Heart left ventricle (tissue), 16 donors: ENCODE measurements at regions of chr6 and their contacts with region 1.

Region 1: GRCh38 chr6:111210194-111210728 is 123.0 kb downstream of the SLC16A10 start:
- DNase-seq: no peak
- ATAC-seq: peak in 3 of 4 donors; percentile 53 to 72 (median 61)
- H3K4me3 ChIP-seq: no peak overlapping the region
- H3K27ac ChIP-seq: no peak overlapping the region
- H3K4me1 ChIP-seq: peaks cover 0 to 5% (median 0%) of the 10 kb centered on the region in 12 donors
- H3K27me3 ChIP-seq: no peaks in the 10 kb centered on the region
- CTCF ChIP-seq: peak; percentile 58 to 81 (median 72)
- POLR2A ChIP-seq: no peak

Region 2: DNA sequence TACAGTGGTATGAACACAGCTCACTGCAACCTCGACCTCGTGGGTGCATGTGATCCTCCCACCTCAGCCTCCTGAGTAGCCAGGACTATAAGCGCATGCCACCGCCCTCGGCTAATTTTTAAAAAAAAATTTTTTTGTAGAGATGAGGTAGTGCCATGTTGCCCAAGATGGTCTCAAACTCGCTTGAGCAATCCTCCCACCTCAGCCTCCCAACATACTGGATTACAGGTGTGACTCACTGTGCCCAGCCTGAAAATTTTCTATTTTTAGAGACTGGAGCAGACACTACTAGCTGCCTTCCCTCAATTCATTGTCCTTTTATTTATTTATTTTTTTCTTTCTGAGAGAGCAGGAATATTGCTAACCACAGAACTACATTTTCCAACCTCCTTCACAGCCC is 272.1 kb before region 1 on chr6:
- intact Hi-C with region 1: no loop called
- DNase-seq: no peak
- ATAC-seq: no peak
- H3K4me3 ChIP-seq: no peak overlapping the region
- H3K27ac ChIP-seq: no peak overlapping the region
- H3K4me1 ChIP-seq: peaks cover 0 to 14% (median 0%) of the 10 kb centered on the region in 12 donors
- H3K27me3 ChIP-seq: no peaks in the 10 kb centered on the region
- CTCF ChIP-seq: no peak
- POLR2A ChIP-seq: no peak

Region 3: GRCh38 chr6:111011360-111012142 is 198.7 kb before region 1 on chr6:
- intact Hi-C with region 1: loop called in 9 of 10 experiments (anchors 1 to 5 kb)
- DNase-seq: no peak
- ATAC-seq: peak in 3 of 4 donors; percentile 59 to 68 (median 65)
- H3K4me3 ChIP-seq: no peak overlapping the region
- H3K27ac ChIP-seq: no peak overlapping the region
- H3K4me1 ChIP-seq: peaks cover 0 to 7% (median 0%) of the 10 kb centered on the region in 12 donors
- H3K27me3 ChIP-seq: no peaks in the 10 kb centered on the region
- CTCF ChIP-seq: peak; percentile 23 to 70 (median 52)
- POLR2A ChIP-seq: no peak

Region 4: GRCh38 chr6:111030008-111031007 is 180.0 kb before region 1 on chr6:
- intact Hi-C with region 1: loop called in 2 of 10 experiments (anchors 5 to 10 kb)
- DNase-seq: peak; percentile 43 to 77 (median 68)
- ATAC-seq: peak; percentile 92 to 94 (median 93)
- H3K4me3 ChIP-seq: no peak overlapping the region
- H3K27ac ChIP-seq: peak overlapping the region in 11 of 12 donors; percentile 34 to 83 (median 58)
- H3K4me1 ChIP-seq: peaks cover 0 to 23% (median 0%) of the 10 kb centered on the region in 12 donors
- H3K27me3 ChIP-seq: no peaks in the 10 kb centered on the region
- CTCF ChIP-seq: no peak
- POLR2A ChIP-seq: no peak

Region 5: DNA sequence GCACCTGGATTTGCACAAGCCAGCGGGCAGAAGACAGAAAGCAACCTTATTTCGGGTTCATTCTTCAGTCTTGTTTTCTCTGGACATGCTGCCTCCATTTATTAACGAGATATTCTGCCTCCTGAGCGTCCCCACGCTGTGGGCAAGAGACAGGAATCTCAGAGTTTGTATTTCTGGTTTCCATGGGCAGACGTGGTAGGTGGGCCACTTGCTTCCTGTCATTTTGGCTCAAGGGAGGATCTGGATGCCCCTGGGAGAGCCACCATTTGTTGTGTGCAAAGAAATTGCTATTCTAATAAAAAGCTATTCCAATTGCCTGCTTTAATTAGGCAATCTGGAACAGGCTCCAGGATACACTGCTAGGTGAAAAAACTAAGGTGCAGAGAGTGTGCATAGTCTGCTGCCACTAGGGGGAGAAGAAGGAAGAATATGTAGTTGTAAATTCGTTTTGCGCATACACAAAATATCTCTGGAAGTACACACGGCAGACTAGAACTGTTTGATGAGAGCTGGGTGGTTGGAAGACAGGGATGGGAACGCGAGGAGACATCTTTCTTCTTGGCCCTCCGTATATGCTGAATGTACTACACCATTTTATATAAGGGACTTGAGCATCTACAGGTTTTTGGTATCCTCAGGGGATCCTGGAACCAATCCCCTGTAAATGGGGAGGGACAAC is 153.0 kb before region 1 on chr6:
- intact Hi-C with region 1: loop called (anchors 2 to 10 kb)
- DNase-seq: no peak
- ATAC-seq: peak in 3 of 4 donors; percentile 52 to 71 (median 63)
- H3K4me3 ChIP-seq: no peak overlapping the region
- H3K27ac ChIP-seq: no peak overlapping the region
- H3K4me1 ChIP-seq: no peaks in the 10 kb centered on the region
- H3K27me3 ChIP-seq: no peaks in the 10 kb centered on the region
- CTCF ChIP-seq: peak; percentile 50 to 68 (median 58)
- POLR2A ChIP-seq: no peak

Region 6: GRCh38 chr6:111087106-111087835 is 123.0 kb before region 1 on chr6 and contains the start of gene SLC16A10:
- intact Hi-C with region 1: loop called in 1 of 10 experiments (anchors 10 kb)
- DNase-seq: peak; percentile 76 to 87 (median 78)
- ATAC-seq: peak; percentile 83 to 97 (median 96)
- H3K4me3 ChIP-seq: peak within 1 kb of the TSS; percentile 47 to 76 (median 62)
- H3K27ac ChIP-seq: peak within 1 kb of the TSS in 9 of 12 donors; percentile 15 to 75 (median 52)
- H3K4me1 ChIP-seq: peaks cover 0 to 18% (median 9%) of the 10 kb centered on the region in 12 donors
- H3K27me3 ChIP-seq: peaks cover 0 to 39% (median 10%) of the 10 kb centered on the region in 9 donors
- CTCF ChIP-seq: no peak
- POLR2A ChIP-seq: peak; percentile 68 to 95
- total RNA-seq, gene SLC16A10: 5.1 to 16.7 (median 7.4) TPM

Region 7: DNA sequence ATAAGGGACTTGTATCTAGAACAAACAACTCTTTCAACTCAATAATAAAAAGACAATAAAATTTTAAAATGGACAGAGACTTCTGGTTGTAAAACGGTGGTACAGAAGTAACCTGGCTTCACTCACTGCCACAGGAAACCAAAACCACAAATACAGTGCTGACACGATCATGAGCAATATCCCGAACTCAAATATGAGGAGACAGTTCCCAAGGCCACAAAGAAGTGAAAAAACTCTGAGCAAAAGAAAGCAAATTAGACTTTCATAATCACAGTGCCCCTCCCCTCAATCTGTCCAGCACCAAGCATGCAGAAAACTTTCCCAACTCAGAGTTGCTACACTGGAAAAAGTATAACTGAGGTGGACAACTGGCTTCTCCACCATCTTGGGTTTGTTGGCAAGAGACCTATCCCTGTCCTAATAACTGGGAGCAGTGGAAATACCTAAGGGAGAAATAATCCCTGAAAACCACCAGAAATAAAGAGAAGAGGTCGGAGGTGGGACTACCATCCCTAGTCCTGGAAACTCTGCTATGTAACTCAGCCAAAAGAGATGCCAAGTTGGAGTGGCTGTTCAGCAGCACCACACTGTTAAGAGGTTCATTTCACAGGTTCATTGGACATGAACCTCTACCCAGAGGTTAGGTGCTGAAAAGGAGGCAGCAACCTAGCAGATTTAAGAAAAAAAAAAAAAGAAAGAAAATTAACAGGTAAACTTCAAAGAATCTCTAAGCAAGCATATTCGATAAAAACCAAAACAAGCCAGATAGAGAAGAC is 217.3 kb after region 1 on chr6:
- intact Hi-C with region 1: no loop called
- DNase-seq: no peak
- ATAC-seq: peak in 2 of 4 donors; percentile 38 to 44
- H3K4me3 ChIP-seq: no peak overlapping the region
- H3K27ac ChIP-seq: peak overlapping the region in 1 of 12 donors; percentile 61
- H3K4me1 ChIP-seq: peaks cover 0 to 53% (median 24%) of the 10 kb centered on the region in 12 donors
- H3K27me3 ChIP-seq: no peaks in the 10 kb centered on the region
- CTCF ChIP-seq: no peak
- POLR2A ChIP-seq: no peak